Activated naive CD4-positive, alpha-beta T cell treated with anti-CD3 and anti-CD28 coated beads for 36 hours (primary cell): ENCODE measurements at regions of chr3 and their contacts with region 1.

Region 1: DNA sequence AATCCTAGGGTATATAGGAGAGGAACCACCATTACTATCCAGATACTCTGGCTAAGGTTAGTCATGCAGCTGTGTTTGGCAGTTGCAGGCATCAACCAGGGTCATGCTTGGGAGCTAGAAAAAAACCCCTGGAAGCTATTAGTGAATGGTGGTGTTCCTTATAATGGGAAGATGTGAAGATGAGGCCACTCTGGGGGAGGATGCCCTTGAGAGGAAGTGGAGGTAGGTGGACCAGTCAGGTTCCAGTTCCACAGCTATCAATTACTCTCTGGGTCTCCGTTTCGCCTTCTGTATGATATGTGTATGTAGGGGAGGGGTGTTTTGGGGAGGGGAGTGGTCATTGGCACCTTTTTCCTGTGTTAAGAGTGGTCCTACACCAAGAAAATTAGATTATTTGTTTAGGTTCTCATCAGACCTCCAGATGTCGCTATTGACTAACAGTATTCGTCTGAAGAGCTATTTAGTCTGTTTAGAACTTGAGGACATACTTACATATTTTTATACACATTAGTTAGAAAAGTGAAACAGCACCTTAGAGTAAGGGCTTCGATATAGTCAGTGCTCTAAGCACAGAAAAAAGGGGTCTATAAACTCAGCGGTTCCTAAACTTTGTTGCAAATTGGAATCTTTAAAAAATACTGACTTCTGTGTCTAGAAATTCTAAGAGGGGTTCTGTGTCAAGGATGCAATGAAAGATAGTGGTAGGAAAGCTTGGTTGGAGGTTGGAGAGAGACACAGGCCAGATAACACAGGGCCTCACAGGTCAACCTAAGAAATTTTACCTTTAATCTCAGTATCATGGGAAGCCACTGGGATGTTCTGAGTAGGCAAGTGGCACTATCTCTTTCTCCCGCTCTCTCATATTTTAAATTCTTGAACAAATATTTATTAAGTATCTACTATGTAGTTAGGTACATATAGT is 9.1 kb upstream of the HPS3 start:
- DNase-seq: no peak
- H3K4me3 Mint-ChIP-seq: no peak overlapping the region
- H3K27ac Mint-ChIP-seq: no peak overlapping the region
- H3K4me1 Mint-ChIP-seq: no peaks in the 10 kb centered on the region
- H3K27me3 Mint-ChIP-seq: peaks cover 4% of the 10 kb centered on the region

Region 2: GRCh38 chr3:148861277-148861869 is 258.9 kb before region 1 on chr3:
- CTCF ChIA-PET with region 1: no interaction called
- intact Hi-C with region 1: loop called (anchors 2 kb)
- DNase-seq: peak; percentile 6
- H3K4me3 Mint-ChIP-seq: no peak overlapping the region
- H3K27ac Mint-ChIP-seq: no peak overlapping the region
- H3K4me1 Mint-ChIP-seq: no peaks in the 10 kb centered on the region
- H3K27me3 Mint-ChIP-seq: peaks cover 8% of the 10 kb centered on the region

Region 3: DNA sequence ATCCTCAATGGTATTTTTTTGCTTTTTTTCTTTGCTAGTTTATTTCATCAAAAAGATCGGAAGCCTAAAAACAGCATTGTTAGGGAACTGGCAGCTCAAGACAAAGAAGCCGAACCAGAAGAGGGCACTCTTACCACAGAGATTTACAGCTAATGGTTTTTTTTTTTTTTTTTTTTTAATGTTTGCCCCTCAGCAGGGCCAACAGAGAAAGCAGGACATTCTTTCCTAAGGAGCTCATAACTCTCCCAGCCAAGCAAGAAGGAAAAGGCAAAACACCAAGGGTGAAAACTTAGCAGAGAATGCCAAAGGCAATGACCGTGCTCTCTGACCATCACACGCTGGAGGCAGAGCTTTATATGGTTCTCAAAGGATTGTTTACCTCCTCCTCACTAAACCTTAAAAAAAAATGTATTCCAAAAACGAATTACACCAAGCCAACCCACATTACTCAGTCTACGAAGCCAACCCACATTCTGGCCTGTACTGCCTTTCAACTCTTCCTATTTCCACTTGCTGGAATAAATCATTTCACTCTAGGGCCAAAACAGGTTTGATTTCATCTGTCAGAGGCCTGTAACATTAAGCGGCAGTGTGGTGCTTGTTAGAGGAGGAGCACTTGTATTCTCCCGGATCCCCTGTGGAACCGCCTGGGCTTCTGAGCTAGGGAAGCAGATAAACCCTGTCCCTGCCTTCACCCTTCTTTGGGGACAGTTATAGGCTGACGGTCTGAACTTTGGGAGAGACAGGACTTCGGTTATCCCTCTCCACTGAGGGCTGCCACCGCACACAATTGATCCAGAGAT is 164.6 kb before region 1 on chr3:
- CTCF ChIA-PET with region 1: interaction called, 10 read pairs
- intact Hi-C with region 1: loop called (anchors 1 kb)
- DNase-seq: peak; percentile 32
- H3K4me3 Mint-ChIP-seq: no peak overlapping the region
- H3K27ac Mint-ChIP-seq: no peak overlapping the region
- H3K4me1 Mint-ChIP-seq: peaks cover 7% of the 10 kb centered on the region
- H3K27me3 Mint-ChIP-seq: no peaks in the 10 kb centered on the region

Region 4: DNA sequence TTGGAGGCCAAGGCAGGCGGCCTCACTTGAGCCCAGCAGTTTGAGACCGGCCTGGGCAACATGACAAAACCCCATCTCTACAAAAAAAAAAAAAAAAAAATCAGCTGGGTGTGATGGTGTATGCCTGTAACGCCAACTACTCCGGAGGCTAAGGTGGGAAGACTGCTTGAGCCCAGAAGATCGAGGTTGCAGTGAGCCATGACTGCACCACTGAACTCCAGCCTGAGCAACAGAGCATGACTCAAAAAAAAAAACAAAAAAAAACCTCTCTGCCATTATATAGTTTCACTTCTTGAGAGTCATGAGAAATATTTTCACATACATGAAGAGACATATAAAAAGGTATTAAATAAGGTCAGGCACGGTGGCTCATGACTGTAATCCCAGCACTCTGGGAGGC is 147.3 kb after region 1 on chr3:
- CTCF ChIA-PET with region 1: interaction called, 103 read pairs
- intact Hi-C with region 1: no loop called
- DNase-seq: no peak
- H3K4me3 Mint-ChIP-seq: no peak overlapping the region
- H3K27ac Mint-ChIP-seq: no peak overlapping the region
- H3K4me1 Mint-ChIP-seq: no peaks in the 10 kb centered on the region
- H3K27me3 Mint-ChIP-seq: no peaks in the 10 kb centered on the region

Region 5: DNA sequence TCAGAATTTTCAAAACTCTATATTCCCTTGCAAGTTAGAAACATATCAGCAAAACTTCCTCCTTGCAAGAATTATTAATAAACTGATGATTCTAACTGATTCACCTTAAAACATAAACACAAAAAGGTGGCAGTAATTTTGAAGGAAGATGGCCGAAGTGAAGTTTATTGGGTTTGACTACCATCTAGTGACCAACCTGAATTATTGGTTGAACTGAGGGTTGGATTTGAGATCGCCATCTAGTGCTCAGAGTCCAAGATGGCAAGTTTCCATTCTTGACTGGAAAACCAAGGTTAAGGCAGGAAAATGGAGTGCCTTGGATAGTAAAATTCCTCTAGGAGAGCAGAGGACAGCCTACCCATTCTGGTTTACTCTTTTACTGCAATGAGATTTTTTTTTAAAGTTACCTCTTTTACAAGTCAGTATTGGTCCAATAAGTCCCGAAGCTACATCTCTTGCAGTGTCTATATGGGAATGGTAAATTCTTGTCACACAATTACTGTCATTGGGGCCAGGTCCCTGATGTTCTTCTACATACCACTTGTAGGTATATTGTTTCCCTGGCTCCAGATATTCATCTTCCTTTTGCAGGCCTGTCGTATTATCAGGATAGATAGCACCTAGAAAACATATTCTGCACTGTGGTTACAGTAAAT is 152.9 kb after region 1 on chr3:
- CTCF ChIA-PET with region 1: interaction called, 103 read pairs
- intact Hi-C with region 1: loop called (anchors 1 kb)
- DNase-seq: peak; percentile 34
- H3K4me3 Mint-ChIP-seq: no peak overlapping the region
- H3K27ac Mint-ChIP-seq: no peak overlapping the region
- H3K4me1 Mint-ChIP-seq: peaks cover 10% of the 10 kb centered on the region
- H3K27me3 Mint-ChIP-seq: no peaks in the 10 kb centered on the region

Region 6: DNA sequence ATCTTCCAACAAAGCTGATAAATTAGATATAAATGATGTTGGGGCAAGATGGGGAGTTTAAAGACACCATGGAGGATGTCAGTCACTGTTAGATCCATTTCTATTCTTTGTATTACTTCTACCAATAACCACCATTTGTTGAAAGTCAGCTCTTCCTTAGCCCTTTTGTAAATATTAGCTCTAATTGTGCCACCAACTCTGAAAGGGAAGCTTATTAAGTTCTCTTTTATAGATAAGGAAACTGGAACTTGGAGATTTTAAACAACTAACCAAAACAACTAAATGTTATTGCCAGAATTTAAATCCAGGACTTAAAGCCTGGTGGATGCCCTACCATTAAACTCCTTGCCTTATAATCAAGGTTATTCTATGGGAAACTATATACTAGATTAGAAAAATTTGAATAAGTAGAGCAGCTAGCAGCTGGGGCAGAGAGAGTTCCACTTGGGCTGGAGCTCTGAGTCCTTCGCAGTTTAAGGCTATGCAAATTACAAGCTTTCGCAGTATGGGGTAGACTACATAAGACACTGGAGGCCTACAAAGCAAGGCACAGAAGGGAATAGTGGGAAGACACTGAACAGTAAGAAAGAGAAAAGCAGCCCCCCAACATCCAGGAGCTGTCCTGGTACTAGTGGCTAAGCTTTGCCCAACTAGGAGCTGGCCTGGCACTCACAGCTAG is 160.5 kb after region 1 on chr3:
- CTCF ChIA-PET with region 1: interaction called, 103 read pairs
- intact Hi-C with region 1: no loop called
- DNase-seq: no peak
- H3K4me3 Mint-ChIP-seq: no peak overlapping the region
- H3K27ac Mint-ChIP-seq: no peak overlapping the region
- H3K4me1 Mint-ChIP-seq: peaks cover 10% of the 10 kb centered on the region
- H3K27me3 Mint-ChIP-seq: no peaks in the 10 kb centered on the region

Region 7: GRCh38 chr3:149480325-149481017 is 360.2 kb after region 1 on chr3:
- CTCF ChIA-PET with region 1: no interaction called
- intact Hi-C with region 1: loop called (anchors 2 kb)
- DNase-seq: peak; percentile 64
- H3K4me3 Mint-ChIP-seq: no peak overlapping the region
- H3K27ac Mint-ChIP-seq: no peak overlapping the region
- H3K4me1 Mint-ChIP-seq: no peaks in the 10 kb centered on the region
- H3K27me3 Mint-ChIP-seq: no peaks in the 10 kb centered on the region